AG04449 (cell line): ENCODE measurements at regions of chr3 and their contacts with region 1.

Region 1: GRCh38 chr3:129052675-129053074 is 7.9 kb upstream of the GP9 start:
- DNase-seq: no peak
- H3K4me3 ChIP-seq: no peak overlapping the region
- CTCF ChIP-seq: no peak

Region 2: GRCh38 chr3:129026728-129027543 is 25.7 kb before region 1 on chr3:
- CTCF ChIA-PET with region 1: interaction called, 38 read pairs
- POLR2A ChIA-PET with region 1: no interaction called
- DNase-seq: no peak
- H3K4me3 ChIP-seq: peak overlapping the region; percentile 30
- CTCF ChIP-seq: peak; percentile 21

Region 3: GRCh38 chr3:129068291-129068886 is 15.7 kb after region 1 on chr3:
- CTCF ChIA-PET with region 1: interaction called, 112 read pairs
- POLR2A ChIA-PET with region 1: no interaction called
- DNase-seq: no peak
- H3K4me3 ChIP-seq: peak overlapping the region; percentile 36
- CTCF ChIP-seq: no peak

Region 4: GRCh38 chr3:129120254-129121004 is 67.8 kb after region 1 on chr3:
- CTCF ChIA-PET with region 1: interaction called, 55 read pairs
- POLR2A ChIA-PET with region 1: interaction called, 3 read pairs
- DNase-seq: peak; percentile 50
- H3K4me3 ChIP-seq: peak overlapping the region; percentile 85
- CTCF ChIP-seq: peak; percentile 39

Region 5: DNA sequence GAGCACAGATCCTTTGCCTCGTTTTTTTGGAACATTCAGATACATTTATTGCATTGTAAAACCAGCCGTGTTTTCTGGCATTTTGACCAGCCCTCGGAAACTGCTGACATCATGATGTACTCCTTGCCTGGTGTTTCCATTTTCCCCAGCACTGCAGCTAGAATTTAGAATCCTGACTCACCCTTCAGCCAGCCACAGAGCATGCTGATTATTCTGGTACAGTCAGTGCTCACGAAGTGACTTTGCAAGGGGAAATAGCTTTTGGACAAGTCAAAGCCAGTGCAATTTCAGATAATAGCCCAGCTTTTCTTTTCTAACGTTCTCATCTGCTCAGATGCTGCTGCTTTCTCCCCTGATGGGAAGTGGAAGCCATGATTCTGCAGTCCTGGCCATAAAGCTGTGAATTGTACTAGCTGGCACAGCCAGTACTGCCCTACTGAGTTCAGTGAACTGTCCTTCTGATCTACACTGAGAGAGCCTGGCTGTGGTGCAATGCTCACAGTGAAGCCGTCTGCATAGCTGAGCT is 143.1 kb after region 1 on chr3:
- CTCF ChIA-PET with region 1: no interaction called
- POLR2A ChIA-PET with region 1: no interaction called
- DNase-seq: peak; percentile 87
- H3K4me3 ChIP-seq: peak overlapping the region; percentile 33
- CTCF ChIP-seq: no peak

Region 6: DNA sequence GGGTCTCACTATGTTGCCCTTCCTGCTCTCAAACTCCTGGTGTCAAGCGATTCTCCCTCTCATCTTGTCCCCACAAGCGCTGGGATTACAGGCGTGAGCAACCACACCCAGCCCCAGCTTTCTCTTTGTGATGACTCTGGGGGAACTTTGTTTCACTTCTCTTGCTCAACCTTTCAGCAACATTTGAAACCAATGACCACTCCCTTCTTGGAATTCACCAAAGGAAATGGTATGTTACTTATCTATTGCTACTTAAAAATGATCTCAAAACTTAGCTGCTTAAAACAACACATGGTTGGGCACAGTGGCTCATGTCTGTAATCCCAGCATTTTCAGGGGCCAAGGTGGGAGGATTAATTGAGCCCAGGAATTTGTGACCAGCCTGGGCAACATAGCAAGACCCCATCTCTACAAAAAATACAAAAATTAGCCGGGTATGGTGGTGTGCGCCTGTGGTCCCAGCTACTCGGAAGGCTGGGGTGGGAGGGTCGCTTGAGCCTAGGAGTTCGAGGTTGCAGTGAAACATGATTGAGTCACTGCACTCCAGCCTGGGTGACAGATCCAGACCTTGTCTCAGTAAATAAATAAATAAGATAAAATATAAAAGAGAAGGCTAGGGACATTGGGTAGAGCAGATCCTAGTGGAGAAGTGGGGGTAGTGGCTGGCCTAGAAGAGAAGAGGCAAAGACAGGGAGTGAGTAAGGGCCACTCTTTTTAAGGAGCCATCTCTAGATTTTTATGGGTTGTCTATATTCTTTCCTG is 186.5 kb after region 1 on chr3:
- CTCF ChIA-PET with region 1: interaction called, 216 read pairs
- POLR2A ChIA-PET with region 1: no interaction called
- DNase-seq: no peak
- H3K4me3 ChIP-seq: no peak overlapping the region
- CTCF ChIP-seq: no peak